Body of pancreas (tissue), 4 donors: ENCODE measurements at regions of chr12 and their contacts with region 1.

Region 1: DNA sequence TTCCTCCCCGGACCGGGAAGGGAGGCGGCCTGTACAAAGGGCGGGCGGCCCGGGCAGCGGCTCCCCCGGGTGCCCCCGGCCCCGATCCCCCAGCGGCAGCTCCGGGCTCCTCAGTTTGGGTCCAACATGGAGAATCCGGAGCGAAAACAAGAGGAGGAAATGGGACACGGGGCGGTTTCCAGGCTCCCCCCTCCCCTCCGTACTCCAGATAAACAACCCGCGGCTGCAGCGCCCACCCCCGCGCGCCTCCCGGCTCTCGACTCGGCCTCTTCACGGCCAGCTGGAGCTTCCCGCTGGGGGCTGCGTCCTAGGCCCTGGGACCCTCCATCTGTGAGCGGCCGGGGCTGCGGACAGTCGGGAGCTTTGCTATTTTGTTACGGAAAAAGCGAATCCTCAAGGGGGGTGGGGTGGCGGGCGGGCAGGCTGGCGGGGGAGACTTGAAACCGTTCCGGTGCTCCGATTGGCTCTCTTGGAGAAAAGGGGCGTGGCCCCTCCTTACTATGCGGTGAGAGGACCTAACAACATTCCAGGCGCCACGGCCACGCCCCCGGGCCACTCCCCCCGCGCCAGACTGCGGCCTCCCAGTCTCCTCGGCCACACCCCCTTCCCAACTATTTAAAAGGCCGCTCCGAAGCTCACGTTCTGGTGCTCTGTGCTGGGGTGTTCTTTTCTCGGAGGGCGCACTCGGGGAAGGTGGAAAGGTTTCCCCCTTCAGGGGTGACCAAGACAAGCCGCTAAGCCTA is at the start of gene CTDSP2:
- DNase-seq: peak; percentile 100
- ATAC-seq: peak; percentile 83
- H3K4me3 ChIP-seq: peak within 1 kb of the TSS; percentile 87 to 99
- H3K27ac ChIP-seq: peak within 1 kb of the TSS; percentile 99 to 100 (median 100)
- H3K4me1 ChIP-seq: peaks cover 36% of the 10 kb centered on the region
- H3K27me3 ChIP-seq: no peaks in the 10 kb centered on the region
- CTCF ChIP-seq: peak in 3 of 7 experiments; percentile 4 to 15 (median 13)
- POLR2A ChIP-seq: peak; percentile 65 to 89 (median 88)
- total RNA-seq, gene CTDSP2: 82.1 to 125 TPM

Region 2: DNA sequence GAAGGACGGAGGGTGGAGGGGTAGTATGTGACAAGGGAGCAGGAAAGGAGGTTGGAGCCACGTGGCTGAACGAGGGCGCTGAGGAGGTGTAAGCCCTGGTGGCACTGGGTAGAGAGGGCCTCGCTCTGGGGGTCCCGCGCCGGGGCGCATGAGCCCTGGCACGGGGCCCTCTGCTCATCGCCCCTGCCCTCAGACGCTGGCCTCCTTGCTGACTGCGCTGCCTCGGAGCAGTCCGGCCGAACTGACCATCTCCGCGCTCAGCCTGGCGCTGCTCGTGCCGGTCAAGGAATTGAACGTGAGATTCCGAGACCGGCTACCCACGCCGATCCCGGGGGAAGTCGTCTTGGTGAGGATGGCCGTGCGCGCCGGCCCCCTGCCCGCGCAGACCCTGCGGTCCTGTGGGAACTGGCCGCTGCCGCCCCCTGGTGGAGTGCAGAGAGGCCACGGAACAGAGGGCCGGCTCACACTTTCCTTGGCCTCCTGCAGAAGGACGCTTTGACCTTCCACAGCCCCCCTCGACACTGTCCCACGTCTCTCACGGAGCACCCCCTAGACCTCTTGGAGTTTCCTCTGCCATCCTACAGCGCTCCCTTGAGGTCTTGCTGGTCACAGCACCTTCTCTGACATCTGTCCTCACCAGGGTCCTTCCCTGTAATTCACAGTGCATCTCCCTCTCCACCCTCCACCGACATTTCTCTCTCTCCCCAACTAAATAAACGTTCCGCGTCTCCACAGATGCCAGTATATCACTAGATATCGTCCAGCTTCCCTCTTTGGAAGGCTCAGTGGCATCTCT is 225.1 kb before region 1 on chr12:
- intact Hi-C with region 1: no loop called
- DNase-seq: peak; percentile 50 to 73 (median 68)
- ATAC-seq: peak; percentile 77
- H3K4me3 ChIP-seq: no peak overlapping the region
- H3K27ac ChIP-seq: no peak overlapping the region
- H3K4me1 ChIP-seq: peaks cover 21% of the 10 kb centered on the region
- H3K27me3 ChIP-seq: peaks cover 0 to 23% of the 10 kb centered on the region in 2 donors
- CTCF ChIP-seq: peak; percentile 80 to 90 (median 87)
- POLR2A ChIP-seq: no peak

Region 3: DNA sequence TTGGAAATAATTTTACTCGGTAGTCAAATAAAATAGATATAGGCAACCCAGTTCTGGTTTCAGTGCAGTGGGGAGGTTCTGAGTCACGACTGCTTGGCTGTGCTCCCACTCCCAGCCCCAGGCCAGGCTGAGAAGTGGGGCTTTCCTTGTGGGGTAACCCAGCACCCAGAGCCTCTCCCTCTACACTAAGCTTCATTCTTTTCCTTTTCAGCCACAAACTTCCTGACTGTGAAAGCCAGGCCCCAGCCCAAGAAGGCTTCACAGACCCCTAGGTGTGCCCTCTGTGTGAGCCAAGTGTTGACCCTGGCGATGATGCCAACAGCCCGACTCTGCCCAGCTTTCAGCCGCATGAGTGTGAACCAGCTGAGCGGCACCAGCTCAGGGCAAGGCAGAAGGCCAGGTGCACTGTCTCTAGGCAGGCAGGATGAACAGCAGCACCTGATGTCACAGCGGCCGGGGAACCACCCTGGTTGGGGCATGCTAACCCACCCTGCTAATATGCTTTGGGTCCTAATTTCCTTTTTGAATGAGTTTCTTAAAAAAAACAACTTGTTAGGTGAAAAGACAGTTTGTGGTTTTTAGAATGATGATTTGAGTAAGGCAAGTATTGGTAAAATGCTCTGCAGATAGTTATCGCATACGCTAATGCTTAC is 52.4 kb after region 1 on chr12:
- intact Hi-C with region 1: loop called (anchors 5 kb)
- DNase-seq: peak in 3 of 4 donors; percentile 13 to 62 (median 30)
- ATAC-seq: no peak
- H3K4me3 ChIP-seq: no peak overlapping the region
- H3K27ac ChIP-seq: peak overlapping the region in 2 of 4 donors; percentile 12 to 31
- H3K4me1 ChIP-seq: peaks cover 45% of the 10 kb centered on the region
- H3K27me3 ChIP-seq: no peaks in the 10 kb centered on the region
- CTCF ChIP-seq: no peak
- POLR2A ChIP-seq: no peak